Posterior vena cava (tissue), 2 donors: ENCODE measurements at regions of chr9 and their contacts with region 1.

Region 1: GRCh38 chr9:110152704-110153374 is 55.1 kb downstream of the C9orf152 start:
- DNase-seq: no peak

Region 2: DNA sequence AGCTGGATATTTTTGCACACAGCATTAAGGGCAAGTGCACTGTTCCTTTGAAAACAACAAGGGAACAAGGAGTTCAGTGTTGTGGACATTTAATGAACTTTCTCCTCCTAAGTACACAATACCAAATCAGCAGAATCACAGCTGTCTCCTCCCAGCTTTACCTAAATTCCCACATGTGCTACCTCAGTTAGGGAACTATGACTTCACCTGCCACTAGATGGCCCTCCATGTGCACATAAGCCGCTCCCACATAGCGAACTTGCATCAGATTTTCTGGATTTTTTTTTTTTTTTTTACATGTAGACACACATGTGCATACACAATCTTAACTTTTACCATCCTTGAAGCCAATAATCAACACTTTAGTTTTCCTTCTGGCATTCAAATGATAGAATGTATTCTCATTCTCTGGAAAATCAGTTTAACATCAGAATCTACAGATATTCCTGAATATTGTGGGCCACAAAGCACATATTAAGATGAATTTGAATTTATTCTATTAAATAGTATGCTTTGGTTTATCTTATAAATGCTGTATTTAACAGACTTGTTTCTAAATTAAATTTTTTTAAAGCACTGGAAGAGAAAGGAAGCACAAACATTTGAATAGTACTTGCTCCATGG is 249.2 kb before region 1 on chr9:
- intact Hi-C with region 1: loop called (anchors 10 kb)
- DNase-seq: no peak

Region 3: GRCh38 chr9:109972026-109972882 is 180.6 kb before region 1 on chr9:
- intact Hi-C with region 1: loop called in 1 of 2 experiments (anchors 10 kb)
- DNase-seq: no peak

Region 4: GRCh38 chr9:110081395-110081794 is 71.4 kb before region 1 on chr9:
- intact Hi-C with region 1: no loop called
- DNase-seq: no peak

Region 5: DNA sequence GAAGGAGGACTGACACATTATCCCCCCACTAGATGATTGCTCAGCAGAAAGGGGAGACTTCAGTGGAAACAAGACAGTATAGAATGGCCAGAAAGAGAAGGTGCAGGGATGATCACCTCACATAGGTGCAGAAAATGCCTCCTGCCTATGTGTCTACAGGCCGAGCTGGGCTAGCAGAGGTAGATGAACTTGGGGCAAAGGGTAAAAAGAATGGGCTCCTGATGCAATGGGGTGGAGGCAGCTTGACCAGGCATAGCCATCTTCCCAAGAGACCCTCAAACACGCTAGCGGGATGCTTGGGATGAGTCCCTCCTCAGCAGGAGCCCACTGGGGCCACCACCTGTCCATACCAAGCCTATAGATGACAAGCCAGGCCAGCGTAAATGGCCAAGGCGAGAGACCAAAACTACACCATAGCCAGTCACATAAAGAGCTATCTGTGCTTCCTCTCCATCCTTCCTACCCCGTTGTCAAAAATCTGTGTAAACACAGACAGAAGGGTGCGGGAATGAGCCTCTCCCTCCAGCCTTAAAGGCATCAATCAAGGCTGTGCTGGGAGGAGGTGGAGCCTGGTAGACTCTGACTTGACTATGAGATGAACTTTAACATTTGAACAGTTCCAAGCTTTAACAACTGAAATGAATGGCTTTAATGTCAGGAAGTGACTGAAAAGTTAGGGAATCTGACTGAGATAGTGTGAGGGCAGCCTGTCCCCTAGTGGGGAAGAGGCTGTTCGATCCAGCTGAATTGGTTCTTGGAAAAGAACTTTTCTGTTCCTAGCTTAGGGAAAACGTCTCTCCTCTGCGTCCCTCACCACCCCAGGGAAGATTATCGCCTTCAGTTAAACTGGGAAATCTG is 44.7 kb after region 1 on chr9:
- intact Hi-C with region 1: no loop called
- DNase-seq: no peak